ENCODE measurements at regions of chr16 and their contacts with region 1.

Region 1: GRCh38 chr16:2155091-2156021 is at the start of gene TRAF7:
- DNase-seq: peak; percentile 100
- ATAC-seq: peak; percentile 93
- H3K4me3 ChIP-seq: peak within 1 kb of the TSS; percentile 71 to 100 (median 90)
- H3K4me3 Mint-ChIP-seq: peak within 1 kb of the TSS; percentile 93
- H3K27ac ChIP-seq: peak within 1 kb of the TSS; percentile 66 to 84
- H3K27ac Mint-ChIP-seq: peak within 1 kb of the TSS; percentile 81
- H3K4me1 ChIP-seq: peaks cover 43 to 76% of the 10 kb centered on the region in 2 donors
- H3K4me1 Mint-ChIP-seq: peaks cover 70% of the 10 kb centered on the region
- H3K27me3 ChIP-seq: no peaks in the 10 kb centered on the region
- H3K27me3 Mint-ChIP-seq: no peaks in the 10 kb centered on the region
- CTCF ChIP-seq: no peak
- total RNA-seq, gene TRAF7: 42.3 and 50.9 TPM in 2 replicates

Region 2: GRCh38 chr16:1959269-1960049 is 195.9 kb before region 1 on chr16 and contains the start of gene NDUFB10:
- CTCF ChIA-PET with region 1: interaction called, 4 read pairs
- POLR2A ChIA-PET with region 1: interaction called, 10 read pairs
- intact Hi-C with region 1: loop called (anchors 1 kb)
- DNase-seq: peak; percentile 93
- ATAC-seq: peak; percentile 94
- H3K4me3 ChIP-seq: peak within 1 kb of the TSS; percentile 51 to 89 (median 86)
- H3K4me3 Mint-ChIP-seq: peak within 1 kb of the TSS; percentile 89
- H3K27ac ChIP-seq: peak within 1 kb of the TSS; percentile 51 to 77
- H3K27ac Mint-ChIP-seq: peak within 1 kb of the TSS; percentile 89
- H3K4me1 ChIP-seq: peaks cover 24 to 47% of the 10 kb centered on the region in 2 donors
- H3K4me1 Mint-ChIP-seq: peaks cover 38% of the 10 kb centered on the region
- H3K27me3 ChIP-seq: no peaks in the 10 kb centered on the region
- H3K27me3 Mint-ChIP-seq: peaks cover 3% of the 10 kb centered on the region
- CTCF ChIP-seq: peak; percentile 80
- total RNA-seq, gene NDUFB10: 63.7 and 70.4 TPM in 2 replicates

Region 3: DNA sequence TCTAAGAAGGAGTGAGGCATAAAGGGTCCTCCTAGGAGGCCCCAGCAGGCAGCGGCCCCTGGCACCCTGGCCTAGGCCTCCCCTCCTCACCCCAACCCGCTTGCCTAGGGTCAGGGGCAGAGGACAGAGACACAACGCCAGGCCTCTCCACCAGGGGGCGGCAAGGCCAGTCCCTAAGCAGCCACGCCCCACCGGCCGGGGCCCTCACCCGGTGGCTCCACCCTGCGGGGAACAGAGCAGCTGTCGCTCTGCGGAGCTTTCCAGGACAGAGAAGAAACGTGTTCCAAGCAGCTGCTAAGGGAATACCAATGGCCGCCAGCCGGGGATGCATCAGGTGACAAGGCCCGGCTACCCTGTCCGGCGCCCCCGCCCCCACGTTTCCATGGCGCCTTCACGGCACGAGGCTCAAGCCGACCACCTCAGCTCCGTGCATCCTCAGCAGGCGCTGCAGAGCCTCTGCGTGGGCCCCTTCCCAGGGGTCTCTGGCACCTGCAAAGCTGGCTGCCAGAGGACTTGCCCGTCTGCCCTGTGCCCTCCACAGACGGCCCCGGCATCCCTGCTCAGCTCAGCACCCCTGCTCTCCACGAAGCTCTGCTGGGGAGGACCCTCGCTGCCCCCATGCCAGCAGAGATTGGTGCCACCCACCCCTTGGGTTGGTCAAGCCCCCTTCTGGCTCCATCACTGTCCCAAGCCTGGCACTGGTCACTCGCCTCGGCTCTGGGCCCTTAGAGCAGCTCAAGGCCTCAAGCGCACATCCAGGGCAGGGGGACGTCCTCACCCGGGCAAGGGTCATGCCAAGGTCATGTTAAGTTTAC is 151.3 kb before region 1 on chr16:
- CTCF ChIA-PET with region 1: interaction called, 10 read pairs
- POLR2A ChIA-PET with region 1: interaction called, 4 read pairs
- intact Hi-C with region 1: loop called (anchors 1 kb)
- DNase-seq: peak; percentile 88
- ATAC-seq: peak; percentile 99
- H3K4me3 ChIP-seq: no peak overlapping the region
- H3K4me3 Mint-ChIP-seq: no peak overlapping the region
- H3K27ac ChIP-seq: no peak overlapping the region
- H3K27ac Mint-ChIP-seq: no peak overlapping the region
- H3K4me1 ChIP-seq: peaks cover 33 to 45% of the 10 kb centered on the region in 2 donors
- H3K4me1 Mint-ChIP-seq: peaks cover 41% of the 10 kb centered on the region
- H3K27me3 ChIP-seq: no peaks in the 10 kb centered on the region
- H3K27me3 Mint-ChIP-seq: no peaks in the 10 kb centered on the region
- CTCF ChIP-seq: peak; percentile 93

Region 4: GRCh38 chr16:2047330-2048115 is 107.8 kb before region 1 on chr16 and contains the starts of genes NTHL1 and TSC2:
- CTCF ChIA-PET with region 1: interaction called, 6 read pairs
- POLR2A ChIA-PET with region 1: no interaction called
- intact Hi-C with region 1: loop called (anchors 1 kb)
- DNase-seq: peak; percentile 95
- ATAC-seq: peak; percentile 97
- H3K4me3 ChIP-seq: peak within 1 kb of the TSS; percentile 27 to 79 (median 78)
- H3K4me3 Mint-ChIP-seq: peak within 1 kb of the TSS; percentile 91
- H3K27ac ChIP-seq: peak within 1 kb of the TSS in 1 of 2 donors; percentile 63
- H3K27ac Mint-ChIP-seq: peak within 1 kb of the TSS; percentile 76
- H3K4me1 ChIP-seq: peaks cover 17 to 35% of the 10 kb centered on the region in 2 donors
- H3K4me1 Mint-ChIP-seq: peaks cover 20% of the 10 kb centered on the region
- H3K27me3 ChIP-seq: no peaks in the 10 kb centered on the region
- H3K27me3 Mint-ChIP-seq: no peaks in the 10 kb centered on the region
- CTCF ChIP-seq: peak; percentile 26
- total RNA-seq, gene NTHL1: 14.1 and 17.5 TPM in 2 replicates
- total RNA-seq, gene TSC2: 188 and 194 TPM in 2 replicates

Region 5: GRCh38 chr16:2213817-2214720 is 58.7 kb after region 1 on chr16:
- CTCF ChIA-PET with region 1: interaction called, 3 read pairs
- POLR2A ChIA-PET with region 1: interaction called, 7 read pairs
- intact Hi-C with region 1: loop called (anchors 2 kb)
- DNase-seq: no peak
- ATAC-seq: no peak
- H3K4me3 ChIP-seq: peak overlapping the region; percentile 17 to 69 (median 57)
- H3K4me3 Mint-ChIP-seq: peak overlapping the region; percentile 78
- H3K27ac ChIP-seq: no peak overlapping the region
- H3K27ac Mint-ChIP-seq: no peak overlapping the region
- H3K4me1 ChIP-seq: peaks cover 10 to 18% of the 10 kb centered on the region in 2 donors
- H3K4me1 Mint-ChIP-seq: peaks cover 16% of the 10 kb centered on the region
- H3K27me3 ChIP-seq: no peaks in the 10 kb centered on the region
- H3K27me3 Mint-ChIP-seq: no peaks in the 10 kb centered on the region
- CTCF ChIP-seq: no peak

Region 6: GRCh38 chr16:2257726-2258125 is 102.4 kb after region 1 on chr16:
- CTCF ChIA-PET with region 1: no interaction called
- POLR2A ChIA-PET with region 1: no interaction called
- intact Hi-C with region 1: no loop called
- DNase-seq: no peak
- ATAC-seq: no peak
- H3K4me3 ChIP-seq: no peak overlapping the region
- H3K4me3 Mint-ChIP-seq: no peak overlapping the region
- H3K27ac ChIP-seq: no peak overlapping the region
- H3K27ac Mint-ChIP-seq: no peak overlapping the region
- H3K4me1 ChIP-seq: peaks cover 0 to 15% of the 10 kb centered on the region in 2 donors
- H3K4me1 Mint-ChIP-seq: peaks cover 10% of the 10 kb centered on the region
- H3K27me3 ChIP-seq: no peaks in the 10 kb centered on the region
- H3K27me3 Mint-ChIP-seq: no peaks in the 10 kb centered on the region
- CTCF ChIP-seq: no peak

Region 7: GRCh38 chr16:2267913-2268666 is 112.7 kb after region 1 on chr16 and contains the start of gene RNPS1:
- CTCF ChIA-PET with region 1: no interaction called
- POLR2A ChIA-PET with region 1: no interaction called
- intact Hi-C with region 1: loop called (anchors 5 kb)
- DNase-seq: peak; percentile 100
- ATAC-seq: peak; percentile 89
- H3K4me3 ChIP-seq: peak within 1 kb of the TSS; percentile 71 to 88 (median 85)
- H3K4me3 Mint-ChIP-seq: peak within 1 kb of the TSS; percentile 96
- H3K27ac ChIP-seq: peak within 1 kb of the TSS; percentile 79 to 91
- H3K27ac Mint-ChIP-seq: peak within 1 kb of the TSS; percentile 99
- H3K4me1 ChIP-seq: peaks cover 18 to 28% of the 10 kb centered on the region in 2 donors
- H3K4me1 Mint-ChIP-seq: peaks cover 47% of the 10 kb centered on the region
- H3K27me3 ChIP-seq: no peaks in the 10 kb centered on the region
- H3K27me3 Mint-ChIP-seq: no peaks in the 10 kb centered on the region
- CTCF ChIP-seq: no peak
- total RNA-seq, gene RNPS1: 209 and 210 TPM in 2 replicates

Region 8: DNA sequence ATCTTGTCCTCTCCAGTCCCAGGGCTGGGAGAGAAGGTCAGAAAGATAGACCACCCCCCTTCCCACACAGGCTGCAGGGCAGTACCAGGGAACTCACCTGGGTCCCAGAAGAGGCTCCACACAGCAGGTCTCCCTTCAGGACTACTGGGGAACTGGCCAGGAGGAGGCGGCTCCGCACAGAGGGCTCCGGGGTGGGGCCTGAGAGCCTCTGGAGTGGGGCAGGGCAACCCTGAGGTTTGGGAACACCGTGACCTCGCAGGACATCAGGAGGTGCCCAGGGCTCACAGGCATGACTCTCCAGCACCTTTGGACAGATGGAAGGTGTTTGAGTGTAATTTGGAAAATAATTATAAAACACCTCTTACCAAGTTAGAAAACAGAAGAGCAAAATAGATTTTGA is 174.2 kb after region 1 on chr16:
- CTCF ChIA-PET with region 1: no interaction called
- POLR2A ChIA-PET with region 1: no interaction called
- intact Hi-C with region 1: no loop called
- DNase-seq: no peak
- ATAC-seq: no peak
- H3K4me3 ChIP-seq: no peak overlapping the region
- H3K4me3 Mint-ChIP-seq: no peak overlapping the region
- H3K27ac ChIP-seq: no peak overlapping the region
- H3K27ac Mint-ChIP-seq: no peak overlapping the region
- H3K4me1 ChIP-seq: no peaks in the 10 kb centered on the region
- H3K4me1 Mint-ChIP-seq: no peaks in the 10 kb centered on the region
- H3K27me3 ChIP-seq: no peaks in the 10 kb centered on the region
- H3K27me3 Mint-ChIP-seq: peaks cover 10% of the 10 kb centered on the region
- CTCF ChIP-seq: no peak

Region 9: DNA sequence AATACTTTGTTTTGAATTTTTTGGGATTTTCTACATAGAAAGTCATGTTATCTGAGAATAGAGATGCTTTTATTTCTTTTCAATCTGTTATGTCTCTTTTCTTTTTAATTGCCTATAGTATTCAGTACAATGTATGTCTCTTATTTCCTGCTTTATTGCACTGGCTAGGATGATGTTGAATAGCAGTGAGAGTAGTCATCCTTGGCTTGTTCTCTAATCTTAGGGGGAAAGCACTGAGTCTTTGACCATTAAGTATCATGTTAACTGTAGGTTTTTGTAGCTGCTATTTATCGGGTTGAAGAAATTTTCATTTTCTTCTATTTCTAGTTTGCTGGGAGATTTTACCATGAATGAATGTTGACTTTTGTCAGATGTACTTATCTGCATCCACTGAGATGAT is 195.1 kb after region 1 on chr16:
- CTCF ChIA-PET with region 1: no interaction called
- POLR2A ChIA-PET with region 1: no interaction called
- intact Hi-C with region 1: no loop called
- DNase-seq: no peak
- ATAC-seq: no peak
- H3K4me3 ChIP-seq: no peak overlapping the region
- H3K4me3 Mint-ChIP-seq: no peak overlapping the region
- H3K27ac ChIP-seq: no peak overlapping the region
- H3K27ac Mint-ChIP-seq: no peak overlapping the region
- H3K4me1 ChIP-seq: no peaks in the 10 kb centered on the region
- H3K4me1 Mint-ChIP-seq: no peaks in the 10 kb centered on the region
- H3K27me3 ChIP-seq: peaks cover 0 to 10% (median 0%) of the 10 kb centered on the region in 4 experiments
- H3K27me3 Mint-ChIP-seq: peaks cover 16% of the 10 kb centered on the region
- CTCF ChIP-seq: no peak

Region 10: DNA sequence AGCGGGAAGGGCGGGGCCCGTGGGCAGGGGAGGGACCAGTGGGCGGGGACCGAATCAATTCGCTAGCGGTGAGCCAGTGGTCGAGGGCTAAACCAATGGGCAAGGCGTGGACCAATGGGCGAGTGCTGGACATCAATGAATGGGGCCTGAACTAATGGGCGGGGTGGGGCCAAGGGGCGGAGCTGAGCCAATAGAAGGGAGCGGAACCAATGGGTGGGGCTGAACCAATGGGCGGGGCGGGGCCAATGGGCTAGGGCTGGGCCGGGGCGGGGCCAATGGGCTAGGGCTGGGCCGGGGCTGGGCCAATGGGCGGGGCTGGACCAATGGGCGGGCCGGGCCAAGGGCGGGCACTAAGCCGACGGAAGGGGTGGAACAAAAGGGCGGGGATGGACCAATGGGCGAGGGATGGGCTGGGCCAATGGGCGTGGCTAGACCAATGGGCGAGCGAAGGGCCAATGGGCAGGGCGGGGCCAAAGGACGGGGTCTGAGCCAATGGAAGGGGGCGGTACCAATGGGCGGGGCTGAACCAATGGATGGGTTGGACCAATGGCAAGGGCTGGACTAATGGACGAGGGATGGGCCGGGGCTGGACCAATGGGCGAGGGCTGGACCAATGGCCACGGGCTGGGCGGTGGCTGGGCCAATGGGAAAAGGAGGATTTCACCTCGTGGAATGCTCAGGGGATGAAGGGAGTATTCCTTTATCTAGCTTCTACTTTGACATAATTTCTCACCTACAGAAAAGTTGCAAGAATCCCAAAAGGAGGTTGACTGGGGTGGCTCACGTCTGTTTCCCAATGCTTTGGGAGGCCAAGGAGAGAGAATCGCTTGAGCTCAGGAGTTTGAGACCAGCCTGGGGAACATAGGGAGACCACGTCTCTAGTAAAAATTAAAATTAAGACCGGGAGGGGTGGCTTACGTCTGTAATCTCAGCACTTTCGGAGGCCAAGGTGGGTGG is 750.4 kb after region 1 on chr16:
- CTCF ChIA-PET with region 1: no interaction called
- POLR2A ChIA-PET with region 1: no interaction called
- intact Hi-C with region 1: loop called (anchors 10 kb)
- DNase-seq: peak; percentile 95
- ATAC-seq: peak; percentile 75
- H3K4me3 ChIP-seq: peak overlapping the region; percentile 21 to 85 (median 74)
- H3K4me3 Mint-ChIP-seq: peak overlapping the region; percentile 93
- H3K27ac ChIP-seq: peak overlapping the region in 1 of 2 donors; percentile 22
- H3K27ac Mint-ChIP-seq: peak overlapping the region; percentile 84
- H3K4me1 ChIP-seq: peaks cover 10 to 28% of the 10 kb centered on the region in 2 donors
- H3K4me1 Mint-ChIP-seq: peaks cover 33% of the 10 kb centered on the region
- H3K27me3 ChIP-seq: no peaks in the 10 kb centered on the region
- H3K27me3 Mint-ChIP-seq: no peaks in the 10 kb centered on the region
- CTCF ChIP-seq: no peak

Measured in B cell (primary cell).